CD8-positive, alpha-beta memory T cell (primary cell): ENCODE measurements at regions of chr16 and their contacts with region 1.

Region 1: DNA sequence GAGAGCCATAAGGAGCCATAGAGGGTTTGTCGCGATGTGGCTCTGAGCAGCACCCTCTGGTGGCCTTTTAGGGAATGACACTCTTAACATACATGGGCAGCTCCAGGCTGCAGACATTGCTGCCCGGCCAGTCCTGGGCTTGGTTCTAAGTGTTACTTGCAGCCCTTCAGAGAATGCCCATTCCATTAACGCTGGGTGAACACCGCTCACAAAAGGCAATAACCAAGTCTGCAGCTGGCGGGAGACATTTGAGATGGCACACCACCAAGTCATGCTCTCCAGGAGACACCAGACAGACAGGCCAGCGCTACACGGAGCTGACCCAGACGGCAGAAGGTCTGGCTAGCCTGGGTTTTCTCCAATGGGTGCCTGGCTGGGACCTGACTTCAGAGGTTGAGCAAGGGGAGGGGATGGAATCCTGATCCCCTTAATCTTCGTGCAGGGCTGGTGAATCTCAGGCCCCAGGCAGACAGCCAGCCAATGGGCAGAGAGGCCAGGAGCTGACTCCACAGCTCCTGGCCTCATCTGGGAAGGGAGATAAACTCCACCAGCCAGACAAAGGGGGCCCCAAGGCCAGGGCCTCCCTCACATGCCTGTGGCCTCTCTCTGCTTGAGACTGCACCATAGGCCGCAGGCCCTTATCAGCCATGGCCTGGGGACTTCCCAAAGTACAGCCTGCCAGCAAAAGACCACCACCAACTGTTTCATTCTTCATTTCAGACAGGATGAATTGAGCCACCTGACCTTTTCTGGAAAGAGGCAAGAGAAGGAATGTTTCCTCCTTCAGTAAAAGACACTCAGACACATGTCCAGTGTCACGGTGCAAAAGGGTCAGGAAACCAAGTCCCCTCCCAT is 58.8 kb downstream of the ZDHHC7 start:
- DNase-seq: peak; percentile 46 to 71 (median 58)
- H3K4me3 ChIP-seq: no peak overlapping the region
- H3K4me3 Mint-ChIP-seq: no peak overlapping the region
- H3K27ac ChIP-seq: peak overlapping the region; percentile 51
- H3K27ac Mint-ChIP-seq: no peak overlapping the region
- H3K4me1 ChIP-seq: peaks cover 9% of the 10 kb centered on the region
- H3K4me1 Mint-ChIP-seq: peaks cover 0 to 8% (median 2%) of the 10 kb centered on the region in 3 donors
- H3K27me3 ChIP-seq: no peaks in the 10 kb centered on the region
- H3K27me3 Mint-ChIP-seq: peaks cover 4 to 7% of the 10 kb centered on the region in 2 donors

Region 2: GRCh38 chr16:84976644-84977400 is 24.3 kb after region 1 on chr16:
- CTCF ChIA-PET with region 1: interaction called, 10 read pairs
- POLR2A ChIA-PET with region 1: no interaction called
- DNase-seq: no peak
- H3K4me3 ChIP-seq: no peak overlapping the region
- H3K4me3 Mint-ChIP-seq: no peak overlapping the region
- H3K27ac ChIP-seq: no peak overlapping the region
- H3K27ac Mint-ChIP-seq: no peak overlapping the region
- H3K4me1 ChIP-seq: no peaks in the 10 kb centered on the region
- H3K4me1 Mint-ChIP-seq: peaks cover 0 to 3% (median 0%) of the 10 kb centered on the region in 3 donors
- H3K27me3 ChIP-seq: no peaks in the 10 kb centered on the region
- H3K27me3 Mint-ChIP-seq: no peaks in the 10 kb centered on the region